ENCODE measurements at regions of chr11 and their contacts with region 1.

Region 1: DNA sequence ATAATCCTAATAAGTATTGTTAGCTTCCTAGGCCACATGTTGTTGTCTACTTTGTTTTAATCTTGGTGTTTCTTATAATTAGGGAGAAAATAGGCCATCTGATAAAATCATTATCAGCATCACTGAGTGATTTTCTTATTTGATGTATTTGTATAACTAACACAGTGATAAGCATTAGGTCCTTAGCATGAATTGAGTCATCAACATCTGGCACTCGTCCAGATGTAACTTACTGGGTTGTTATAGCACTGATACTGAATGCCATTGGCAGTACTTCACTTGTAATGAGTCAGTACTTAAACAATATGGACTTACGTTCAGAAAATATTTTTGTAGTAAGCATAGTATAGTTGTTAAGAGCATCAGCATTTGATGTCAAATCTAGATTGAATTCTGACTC is 16.2 kb downstream of the API5 start:
- DNase-seq: no peak
- ATAC-seq: no peak
- H3K4me3 ChIP-seq: no peak overlapping the region
- H3K27ac ChIP-seq: no peak overlapping the region
- H3K4me1 ChIP-seq: no peaks in the 10 kb centered on the region
- H3K27me3 ChIP-seq: no peaks in the 10 kb centered on the region
- CTCF ChIP-seq: no peak

Region 2: GRCh38 chr11:43399983-43400630 is 72.1 kb after region 1 on chr11:
- intact Hi-C with region 1: loop called in 3 of 10 experiments (anchors 10 kb)
- DNase-seq: no peak
- ATAC-seq: no peak
- H3K4me3 ChIP-seq: no peak overlapping the region
- H3K27ac ChIP-seq: no peak overlapping the region
- H3K4me1 ChIP-seq: no peaks in the 10 kb centered on the region
- H3K27me3 ChIP-seq: no peaks in the 10 kb centered on the region
- CTCF ChIP-seq: no peak